ENCODE measurements at regions of chr2 and their contacts with region 1.

Region 1: DNA sequence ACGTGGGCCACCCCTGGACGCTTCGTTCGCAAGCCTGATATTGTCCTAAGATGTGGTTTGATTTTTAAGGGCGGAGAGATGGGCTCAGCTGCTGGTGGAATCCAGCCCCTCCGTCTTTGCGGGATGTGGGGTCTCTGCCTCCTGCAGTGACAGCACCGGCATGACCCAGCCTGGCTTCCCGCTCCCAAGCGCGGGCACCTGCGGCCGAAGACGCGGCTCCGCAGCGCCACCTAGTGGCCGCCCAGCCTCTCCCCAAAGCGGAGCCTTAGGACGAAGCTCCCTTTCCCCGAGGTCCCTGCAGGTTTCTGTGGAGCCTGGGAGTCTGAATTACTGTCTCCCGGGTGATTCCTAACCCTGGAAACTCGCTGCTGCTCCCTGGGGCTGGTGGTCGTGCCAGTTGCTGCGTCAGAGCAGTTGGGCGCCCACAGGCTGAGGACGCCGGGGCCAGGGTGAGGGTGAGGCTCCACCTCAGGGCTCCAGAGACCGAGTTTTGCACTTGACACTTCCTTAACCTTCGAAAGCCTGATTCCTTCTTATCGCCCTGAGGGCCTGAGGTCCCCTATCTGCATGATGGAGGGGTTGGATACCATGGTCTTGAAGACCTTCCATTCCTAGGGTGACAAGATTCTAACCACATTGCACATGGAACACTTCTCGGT is 137.5 kb downstream of the TPO start:
- DNase-seq: peak; percentile 22
- ATAC-seq: peak; percentile 67
- H3K4me3 ChIP-seq: no peak overlapping the region
- H3K27ac ChIP-seq: no peak overlapping the region
- H3K4me1 ChIP-seq: peaks cover 18% of the 10 kb centered on the region
- H3K27me3 ChIP-seq: no peaks in the 10 kb centered on the region; the same call in 1 of the 2 replicates
- CTCF ChIP-seq: peak; percentile 77
- POLR2A ChIP-seq: no peak
- RAD21 ChIP-seq: peak; percentile 58

Region 2: GRCh38 chr2:677056-677965 is 873.5 kb before region 1 on chr2 and contains the start of gene TMEM18:
- CTCF ChIA-PET with region 1: no interaction called
- POLR2A ChIA-PET with region 1: no interaction called
- dilution Hi-C with region 1: no loop called
- in situ Hi-C with region 1: no loop called
- intact Hi-C with region 1: loop called (anchors 2 kb)
- DNase-seq: peak; percentile 99
- ATAC-seq: peak; percentile 84
- H3K4me3 ChIP-seq: peak within 1 kb of the TSS; percentile 70
- H3K27ac ChIP-seq: peak within 1 kb of the TSS; percentile 94
- H3K4me1 ChIP-seq: peaks cover 19% of the 10 kb centered on the region
- H3K27me3 ChIP-seq: no peaks in the 10 kb centered on the region
- CTCF ChIP-seq: peak; percentile 32; the same call in 1 of the 2 replicates
- POLR2A ChIP-seq: peak; percentile 92
- RAD21 ChIP-seq: no peak
- total RNA-seq, gene TMEM18: 15.2 and 21.9 TPM in 2 replicates

Region 3: GRCh38 chr2:950080-950966 is 600.5 kb before region 1 on chr2 and contains the start of gene SNTG2:
- CTCF ChIA-PET with region 1: interaction called, 4 read pairs
- POLR2A ChIA-PET with region 1: no interaction called
- dilution Hi-C with region 1: no loop called
- in situ Hi-C with region 1: no loop called
- intact Hi-C with region 1: loop called (anchors 1 kb)
- DNase-seq: no peak
- ATAC-seq: peak; percentile 87
- H3K4me3 ChIP-seq: peak within 1 kb of the TSS; percentile 46
- H3K27ac ChIP-seq: no peak within 1 kb of the TSS
- H3K4me1 ChIP-seq: no peaks in the 10 kb centered on the region
- H3K27me3 ChIP-seq: peaks cover 28% of the 10 kb centered on the region
- CTCF ChIP-seq: no peak
- POLR2A ChIP-seq: no peak
- RAD21 ChIP-seq: no peak
- total RNA-seq, gene SNTG2: under 0.01 and 0.56 TPM in 2 replicates

Region 4: GRCh38 chr2:1140389-1141003 is 410.3 kb before region 1 on chr2:
- CTCF ChIA-PET with region 1: no interaction called
- POLR2A ChIA-PET with region 1: no interaction called
- dilution Hi-C with region 1: no loop called
- in situ Hi-C with region 1: no loop called
- intact Hi-C with region 1: loop called (anchors 10 kb)
- DNase-seq: no peak
- ATAC-seq: peak; percentile 60
- H3K4me3 ChIP-seq: no peak overlapping the region
- H3K27ac ChIP-seq: no peak overlapping the region
- H3K4me1 ChIP-seq: no peaks in the 10 kb centered on the region
- H3K27me3 ChIP-seq: no peaks in the 10 kb centered on the region
- CTCF ChIP-seq: peak; percentile 60
- POLR2A ChIP-seq: no peak
- RAD21 ChIP-seq: peak; percentile 57

Region 5: GRCh38 chr2:1769703-1770422 is 219.1 kb after region 1 on chr2:
- CTCF ChIA-PET with region 1: interaction called, 5 read pairs
- POLR2A ChIA-PET with region 1: no interaction called
- dilution Hi-C with region 1: no loop called
- in situ Hi-C with region 1: no loop called
- intact Hi-C with region 1: loop called (anchors 1 kb)
- DNase-seq: peak; percentile 62
- ATAC-seq: peak; percentile 60; the same call in 1 of the 2 replicates
- H3K4me3 ChIP-seq: no peak overlapping the region
- H3K27ac ChIP-seq: no peak overlapping the region
- H3K4me1 ChIP-seq: no peaks in the 10 kb centered on the region
- H3K27me3 ChIP-seq: peaks cover 3% of the 10 kb centered on the region; the same call in 1 of the 2 replicates
- CTCF ChIP-seq: peak; percentile 76
- POLR2A ChIP-seq: no peak
- RAD21 ChIP-seq: peak; percentile 92

Measured in IMR-90 (cell line).